Thyroid gland (tissue), 4 donors: ENCODE measurements at regions of chr5 and their contacts with region 1.

Region 1: DNA sequence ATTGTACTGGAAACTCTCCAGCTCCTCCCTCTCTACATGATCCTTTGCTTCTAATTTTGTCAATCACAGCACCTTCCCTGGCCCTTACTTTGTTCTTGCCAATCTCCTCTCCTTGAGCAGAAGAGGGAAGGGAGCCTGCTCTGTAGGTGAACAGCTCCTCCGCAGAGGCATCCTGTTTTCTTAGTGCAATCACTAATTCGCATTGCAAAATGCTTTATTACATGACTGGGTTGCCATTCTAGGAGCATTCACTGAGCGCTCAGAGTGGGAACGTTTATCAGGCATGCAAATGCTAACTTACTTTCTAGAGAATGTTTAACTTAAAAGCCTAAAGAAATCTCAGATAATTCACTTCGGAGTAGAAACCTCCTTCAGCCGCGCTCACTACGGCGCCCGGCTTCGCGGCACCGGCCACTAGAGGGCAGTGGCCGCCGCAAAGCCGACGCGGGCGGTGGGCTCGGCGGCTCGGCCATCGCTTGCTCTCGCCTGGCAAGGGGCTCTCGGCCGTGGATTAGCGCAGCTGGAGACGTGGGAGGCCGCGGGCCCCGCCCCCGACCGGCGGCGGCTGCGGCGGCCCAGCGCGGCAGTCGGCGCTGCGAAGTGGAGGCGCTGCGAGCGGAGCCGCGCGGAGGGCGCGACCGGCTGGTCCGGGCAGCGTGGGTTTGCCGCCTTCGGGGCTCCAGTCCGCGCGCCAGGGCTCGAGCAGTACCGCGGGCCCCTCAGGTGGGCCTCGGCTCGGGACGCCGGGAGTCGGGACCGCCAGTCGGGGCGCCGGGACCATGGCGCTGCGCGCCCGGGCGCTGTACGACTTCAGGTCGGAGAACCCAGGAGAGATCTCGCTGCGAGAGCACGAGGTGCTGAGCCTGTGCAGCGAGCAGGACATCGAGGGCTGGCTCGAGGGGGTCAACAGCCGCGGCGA is at the start of gene SNX18:
- DNase-seq: peak; percentile 92 to 93
- H3K4me3 ChIP-seq: peak within 1 kb of the TSS; percentile 88 to 95 (median 92)
- H3K27ac ChIP-seq: peak within 1 kb of the TSS; percentile 87 to 98 (median 96)
- H3K4me1 ChIP-seq: peaks cover 36 to 44% of the 10 kb centered on the region in 2 donors
- H3K27me3 ChIP-seq: no peaks in the 10 kb centered on the region
- CTCF ChIP-seq: peak; percentile 77 to 99 (median 96)
- POLR2A ChIP-seq: peak; percentile 78 to 97
- total RNA-seq, gene SNX18: 50.4 to 89.4 (median 72.8) TPM

Region 2: GRCh38 chr5:53303105-53303504 is 1214.3 kb before region 1 on chr5:
- intact Hi-C with region 1: no loop called
- DNase-seq: no peak
- H3K4me3 ChIP-seq: no peak overlapping the region
- H3K27ac ChIP-seq: no peak overlapping the region
- H3K4me1 ChIP-seq: no peaks in the 10 kb centered on the region
- H3K27me3 ChIP-seq: no peaks in the 10 kb centered on the region
- CTCF ChIP-seq: no peak
- POLR2A ChIP-seq: no peak

Region 3: GRCh38 chr5:54764102-54765090 is 247.0 kb after region 1 on chr5:
- intact Hi-C with region 1: loop called (anchors 5 kb)
- DNase-seq: no peak
- H3K4me3 ChIP-seq: no peak overlapping the region
- H3K27ac ChIP-seq: no peak overlapping the region
- H3K4me1 ChIP-seq: no peaks in the 10 kb centered on the region
- H3K27me3 ChIP-seq: no peaks in the 10 kb centered on the region
- CTCF ChIP-seq: no peak
- POLR2A ChIP-seq: no peak

Region 4: GRCh38 chr5:54844905-54845566 is 327.6 kb after region 1 on chr5:
- intact Hi-C with region 1: loop called (anchors 2 kb)
- DNase-seq: no peak
- H3K4me3 ChIP-seq: no peak overlapping the region
- H3K27ac ChIP-seq: no peak overlapping the region
- H3K4me1 ChIP-seq: no peaks in the 10 kb centered on the region
- H3K27me3 ChIP-seq: no peaks in the 10 kb centered on the region
- CTCF ChIP-seq: peak; percentile 31 to 79 (median 54)
- POLR2A ChIP-seq: no peak

Region 5: GRCh38 chr5:54867310-54867944 is 350.0 kb after region 1 on chr5:
- intact Hi-C with region 1: loop called (anchors 5 kb)
- DNase-seq: no peak
- H3K4me3 ChIP-seq: no peak overlapping the region
- H3K27ac ChIP-seq: no peak overlapping the region
- H3K4me1 ChIP-seq: no peaks in the 10 kb centered on the region
- H3K27me3 ChIP-seq: no peaks in the 10 kb centered on the region
- CTCF ChIP-seq: peak; percentile 24 to 65 (median 52)
- POLR2A ChIP-seq: no peak